ENCODE measurements at regions of chr15 and their contacts with region 1.

Region 1: DNA sequence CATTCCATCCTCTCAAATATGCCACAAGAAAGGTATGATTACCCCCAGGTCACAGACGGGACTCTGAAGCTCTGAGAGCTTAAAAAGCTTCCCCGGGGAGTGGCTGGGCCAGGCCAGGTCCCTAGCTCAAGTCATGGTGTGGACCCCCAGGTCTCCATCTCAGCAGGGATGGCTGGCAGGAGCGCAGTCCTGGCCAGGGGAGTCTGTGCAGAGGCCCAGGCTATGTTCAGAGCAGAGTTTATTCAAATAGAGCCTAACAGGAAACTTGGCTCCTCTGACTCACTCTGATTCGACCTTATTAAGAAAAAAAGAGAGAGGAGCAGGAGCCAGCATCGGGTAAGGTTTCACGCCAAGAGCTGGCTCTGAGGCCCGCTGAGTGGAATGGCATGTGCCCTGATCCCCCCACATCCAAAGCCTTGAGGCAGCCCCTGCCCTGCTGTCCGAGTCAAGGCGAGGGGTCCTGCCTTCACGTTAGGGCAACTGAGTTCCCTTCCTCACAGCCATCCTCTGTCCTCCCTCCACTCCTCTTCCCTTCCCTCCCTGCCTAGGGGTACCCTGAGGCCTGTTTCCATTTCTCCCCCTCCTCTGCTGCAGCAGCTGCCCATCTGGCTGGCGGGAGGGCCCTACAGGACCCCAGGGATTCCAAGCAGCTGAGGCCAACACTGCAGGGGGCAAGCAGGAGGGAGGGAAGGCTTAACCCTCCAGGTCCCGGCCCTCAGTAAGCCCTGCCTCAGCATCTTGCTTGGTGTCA is 1.9 kb upstream of the LOXL1 start:
- DNase-seq: no peak
- H3K4me3 ChIP-seq: no peak overlapping the region
- H3K27ac ChIP-seq: peak overlapping the region; percentile 87
- H3K4me1 ChIP-seq: peaks cover 68% of the 10 kb centered on the region
- H3K27me3 ChIP-seq: no peaks in the 10 kb centered on the region
- CTCF ChIP-seq: no peak
- POLR2A ChIP-seq: no peak

Region 2: DNA sequence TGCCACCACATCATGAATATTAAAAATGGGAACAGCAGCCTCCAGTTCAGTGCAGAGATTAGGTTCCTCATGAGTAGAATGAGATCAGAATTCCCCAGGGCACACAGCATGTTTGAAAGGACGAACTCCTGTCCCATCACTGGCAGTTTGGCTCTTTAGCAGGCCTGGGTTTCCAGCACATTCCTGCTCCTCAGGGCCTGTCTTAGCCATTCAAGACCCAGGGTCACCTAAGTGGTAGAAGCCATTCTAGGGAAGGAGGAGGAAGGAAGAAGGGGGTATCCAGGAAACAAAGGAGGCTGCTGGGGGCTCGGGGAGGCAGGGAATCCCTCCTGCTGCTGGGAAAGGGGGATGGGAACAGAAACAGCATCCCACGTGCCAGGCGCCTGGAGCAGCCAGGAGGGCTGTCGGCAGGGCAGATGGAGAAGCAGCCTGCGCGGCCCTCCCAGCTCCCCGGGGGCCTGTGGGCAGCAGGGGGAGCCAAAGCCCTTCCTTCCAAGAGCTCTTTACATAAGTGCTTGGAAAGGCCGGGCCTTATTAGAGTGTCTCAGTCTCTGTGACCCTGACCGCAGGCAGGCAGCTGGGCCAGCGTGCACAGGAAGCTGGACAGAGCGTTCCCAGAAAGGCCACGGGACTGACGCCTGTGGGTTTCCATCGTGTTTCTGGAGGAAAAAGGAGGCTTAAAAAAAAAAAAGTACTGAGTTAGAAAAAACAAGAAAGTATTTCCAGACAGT is 26.6 kb after region 1 on chr15:
- intact Hi-C with region 1: loop called (anchors 2 kb)
- DNase-seq: peak in 1 of 2 donors; percentile 98
- H3K4me3 ChIP-seq: no peak overlapping the region
- H3K27ac ChIP-seq: peak overlapping the region; percentile 92
- H3K4me1 ChIP-seq: peaks cover 25% of the 10 kb centered on the region
- H3K27me3 ChIP-seq: no peaks in the 10 kb centered on the region
- CTCF ChIP-seq: peak; percentile 69 to 83 (median 80)
- POLR2A ChIP-seq: no peak